ENCODE measurements at regions of chr10 and their contacts with region 1.

Region 1: GRCh38 chr10:62038609-62039190 is 137.2 kb downstream of the ARID5B start:
- DNase-seq: peak; percentile 85
- H3K4me3 Mint-ChIP-seq: peak overlapping the region; percentile 47
- H3K27ac Mint-ChIP-seq: peak overlapping the region; percentile 84
- H3K4me1 Mint-ChIP-seq: peaks cover 81% of the 10 kb centered on the region
- H3K27me3 Mint-ChIP-seq: no peaks in the 10 kb centered on the region

Region 2: DNA sequence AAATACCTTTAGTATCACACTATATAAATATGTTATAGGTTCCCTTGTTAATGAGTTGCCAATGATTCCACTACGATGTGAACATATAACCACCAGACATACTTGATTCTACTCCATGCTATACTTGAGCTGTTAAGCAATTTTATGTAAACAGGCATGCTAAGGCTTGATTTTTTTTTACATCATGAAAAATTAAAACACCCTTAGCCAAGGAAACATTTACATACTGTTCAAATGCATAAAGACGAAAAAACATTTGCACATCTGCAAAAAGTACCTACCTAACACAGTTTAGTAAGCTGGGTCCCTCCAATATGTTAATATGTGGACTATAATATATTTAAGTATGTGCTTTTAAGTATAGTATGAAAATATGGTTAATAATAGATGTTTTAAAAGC is 385.0 kb before region 1 on chr10:
- CTCF ChIA-PET with region 1: no interaction called
- POLR2A ChIA-PET with region 1: no interaction called
- intact Hi-C with region 1: no loop called
- DNase-seq: no peak
- H3K4me3 Mint-ChIP-seq: no peak overlapping the region
- H3K27ac Mint-ChIP-seq: no peak overlapping the region
- H3K4me1 Mint-ChIP-seq: no peaks in the 10 kb centered on the region
- H3K27me3 Mint-ChIP-seq: peaks cover 9% of the 10 kb centered on the region

Region 3: GRCh38 chr10:61896854-61897661 is 141.6 kb before region 1 on chr10:
- CTCF ChIA-PET with region 1: interaction called, 14 read pairs
- POLR2A ChIA-PET with region 1: no interaction called
- intact Hi-C with region 1: no loop called
- DNase-seq: peak; percentile 70
- H3K4me3 Mint-ChIP-seq: peak overlapping the region; percentile 66
- H3K27ac Mint-ChIP-seq: peak overlapping the region; percentile 95
- H3K4me1 Mint-ChIP-seq: peaks cover 43% of the 10 kb centered on the region
- H3K27me3 Mint-ChIP-seq: no peaks in the 10 kb centered on the region

Region 4: DNA sequence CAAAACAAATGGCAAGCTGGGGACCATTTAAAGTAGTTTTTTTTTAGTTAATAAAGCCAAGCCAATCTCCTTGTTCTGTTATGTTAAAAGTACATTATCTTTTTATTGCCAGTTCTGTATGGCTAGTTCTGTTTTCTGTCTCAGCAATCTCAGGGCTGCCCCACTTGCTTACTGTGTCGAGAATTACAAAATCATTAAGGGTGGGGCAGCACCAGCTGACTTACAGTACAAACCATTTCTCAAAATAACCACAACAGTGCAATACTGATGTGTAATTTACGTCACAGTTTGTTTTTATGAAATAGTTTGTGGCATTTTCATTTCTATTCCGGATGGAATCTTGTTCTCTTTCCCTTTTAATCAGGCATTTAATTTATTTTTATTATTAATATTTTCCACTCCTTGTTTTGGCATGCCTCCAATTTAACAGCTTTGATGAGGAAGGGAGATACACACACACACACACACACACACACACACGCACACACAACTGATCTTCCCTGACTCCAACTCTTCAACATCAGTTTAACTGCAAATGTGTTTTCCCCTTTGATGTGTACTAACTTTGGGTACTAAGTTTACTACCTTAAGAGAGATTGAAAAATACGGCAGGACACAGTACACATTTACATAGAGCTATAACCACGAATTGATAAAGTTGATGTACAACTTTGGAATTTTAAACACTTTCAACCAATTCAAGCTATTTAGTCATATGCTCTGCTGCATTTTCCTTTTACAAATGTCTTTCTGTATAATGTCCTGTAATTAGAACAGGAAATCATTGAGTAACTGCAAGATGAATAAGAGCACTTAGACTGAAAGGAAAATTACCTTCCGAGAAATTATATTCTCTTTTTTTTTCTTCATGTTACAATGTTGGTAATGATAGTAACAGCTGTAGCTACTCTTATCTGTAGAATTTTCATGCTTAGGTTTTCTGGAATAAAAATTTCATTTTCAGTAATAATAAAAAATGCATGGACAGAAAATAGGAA is 45.7 kb before region 1 on chr10:
- CTCF ChIA-PET with region 1: interaction called, 27 read pairs
- POLR2A ChIA-PET with region 1: no interaction called
- intact Hi-C with region 1: no loop called
- DNase-seq: peak; percentile 75
- H3K4me3 Mint-ChIP-seq: peak overlapping the region; percentile 57
- H3K27ac Mint-ChIP-seq: peak overlapping the region; percentile 99
- H3K4me1 Mint-ChIP-seq: peaks cover 85% of the 10 kb centered on the region
- H3K27me3 Mint-ChIP-seq: no peaks in the 10 kb centered on the region

Region 5: DNA sequence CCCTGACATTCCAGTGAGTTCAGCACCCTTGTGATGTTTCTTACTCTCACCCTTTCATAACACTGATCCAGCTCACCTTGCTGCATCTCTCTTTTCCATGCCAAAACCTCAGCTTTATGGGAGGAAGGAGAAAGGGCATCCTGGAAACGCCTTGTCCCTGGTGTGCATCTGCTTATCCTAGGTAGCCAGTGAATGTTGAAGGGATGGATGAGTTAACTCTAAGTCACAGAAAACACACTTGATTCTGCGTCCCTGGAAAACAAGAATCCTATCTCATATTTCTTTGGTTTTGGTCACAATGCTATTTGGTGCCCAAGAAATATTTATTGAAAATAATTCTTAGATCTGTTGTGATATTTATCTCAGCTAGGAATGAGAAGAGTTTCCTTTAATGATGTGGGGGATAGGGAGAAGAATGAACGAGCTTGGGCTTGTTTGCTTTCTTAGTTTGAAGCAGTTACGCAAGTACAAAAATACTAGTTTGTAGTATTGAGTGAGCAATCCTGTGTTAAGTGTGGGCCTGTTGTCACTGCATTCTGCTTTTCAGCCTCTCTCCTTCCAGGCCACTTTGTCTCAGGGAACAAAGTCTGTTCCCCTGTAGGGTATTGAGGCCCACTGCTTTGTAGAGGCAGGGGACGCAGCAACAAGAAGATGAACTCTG is 10.7 kb before region 1 on chr10:
- CTCF ChIA-PET with region 1: interaction called, 80 read pairs
- POLR2A ChIA-PET with region 1: interaction called, 163 read pairs
- intact Hi-C with region 1: no loop called
- DNase-seq: no peak
- H3K4me3 Mint-ChIP-seq: no peak overlapping the region
- H3K27ac Mint-ChIP-seq: peak overlapping the region; percentile 85
- H3K4me1 Mint-ChIP-seq: peaks cover 88% of the 10 kb centered on the region
- H3K27me3 Mint-ChIP-seq: no peaks in the 10 kb centered on the region

Region 6: GRCh38 chr10:62063795-62064472 is 25.2 kb after region 1 on chr10:
- CTCF ChIA-PET with region 1: interaction called, 13 read pairs
- POLR2A ChIA-PET with region 1: interaction called, 12 read pairs
- intact Hi-C with region 1: no loop called
- DNase-seq: no peak
- H3K4me3 Mint-ChIP-seq: peak overlapping the region; percentile 41
- H3K27ac Mint-ChIP-seq: peak overlapping the region; percentile 93
- H3K4me1 Mint-ChIP-seq: peaks cover 90% of the 10 kb centered on the region
- H3K27me3 Mint-ChIP-seq: no peaks in the 10 kb centered on the region

Region 7: DNA sequence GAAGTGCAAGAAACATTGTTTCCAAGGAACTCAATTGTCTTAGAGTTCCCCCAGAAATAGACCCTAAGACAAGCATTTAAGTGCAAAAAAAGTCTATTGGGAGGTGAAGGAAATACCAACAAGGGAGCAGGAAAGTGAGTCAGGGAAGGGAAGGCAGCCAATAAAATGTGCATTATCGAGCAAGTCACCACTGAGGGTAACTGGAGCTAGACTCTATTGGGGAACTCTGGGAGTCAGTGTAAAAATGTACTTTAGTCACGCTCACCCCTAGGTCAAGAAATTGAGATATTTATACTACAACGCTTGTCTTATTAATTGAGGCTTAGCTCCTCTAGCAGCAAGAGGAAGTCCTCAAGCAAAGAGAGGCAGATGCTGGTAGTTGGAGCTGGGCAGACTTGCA is 92.2 kb after region 1 on chr10:
- CTCF ChIA-PET with region 1: no interaction called
- POLR2A ChIA-PET with region 1: no interaction called
- intact Hi-C with region 1: no loop called
- DNase-seq: no peak
- H3K4me3 Mint-ChIP-seq: no peak overlapping the region
- H3K27ac Mint-ChIP-seq: no peak overlapping the region
- H3K4me1 Mint-ChIP-seq: peaks cover 6% of the 10 kb centered on the region
- H3K27me3 Mint-ChIP-seq: no peaks in the 10 kb centered on the region

Region 8: GRCh38 chr10:62214364-62214874 is 175.7 kb after region 1 on chr10:
- CTCF ChIA-PET with region 1: no interaction called
- POLR2A ChIA-PET with region 1: no interaction called
- intact Hi-C with region 1: no loop called
- DNase-seq: no peak
- H3K4me3 Mint-ChIP-seq: no peak overlapping the region
- H3K27ac Mint-ChIP-seq: no peak overlapping the region
- H3K4me1 Mint-ChIP-seq: no peaks in the 10 kb centered on the region
- H3K27me3 Mint-ChIP-seq: no peaks in the 10 kb centered on the region